ENCODE measurements at regions of chr6 and their contacts with region 1.

Region 1: DNA sequence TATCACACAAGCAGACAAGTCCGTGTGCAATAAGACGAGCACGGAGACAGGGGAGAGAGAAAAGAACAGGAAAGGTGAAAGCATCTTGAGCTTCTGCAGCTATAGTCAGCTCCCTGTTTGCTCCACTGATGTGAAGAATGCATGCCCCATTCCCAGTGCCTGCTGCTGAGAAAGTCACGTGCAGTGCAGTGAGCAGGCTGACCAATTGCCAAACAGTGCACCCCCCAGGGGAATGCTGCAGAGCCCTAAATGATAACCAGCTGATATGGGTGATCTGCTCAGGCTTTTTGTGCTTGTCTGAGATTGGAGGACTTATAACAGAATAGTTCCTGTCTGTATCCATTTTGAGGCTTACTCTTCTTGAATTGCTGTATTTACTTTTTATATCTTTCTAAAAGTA is 121.5 kb downstream of the PACRG start:
- DNase-seq: no peak
- ATAC-seq: no peak

Region 2: DNA sequence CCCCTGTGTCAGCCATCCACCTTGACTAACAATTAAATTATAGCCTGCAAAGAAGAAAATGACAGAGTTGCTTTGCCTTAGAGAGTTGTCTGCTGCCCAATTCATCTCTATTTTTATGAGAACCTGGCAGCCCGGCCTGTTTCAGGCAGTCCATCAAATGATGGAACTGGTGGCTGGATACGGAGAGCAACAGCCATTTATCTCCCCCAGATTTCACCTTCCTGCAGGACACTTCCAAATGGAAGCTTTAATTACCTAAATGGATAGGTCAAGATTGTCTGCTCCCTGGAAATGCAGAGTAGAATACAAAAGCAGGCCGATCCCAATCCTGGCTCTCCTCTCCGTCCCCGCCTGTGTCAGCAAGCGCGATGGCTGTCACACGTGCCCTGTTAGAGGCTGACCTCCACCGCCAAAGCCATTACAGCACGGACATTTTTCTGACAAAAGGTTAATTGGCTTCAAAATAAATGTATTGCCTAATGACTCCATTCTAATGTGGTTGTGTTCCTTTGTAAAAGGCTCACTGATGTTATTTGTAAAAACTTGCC is 34.8 kb before region 1 on chr6:
- intact Hi-C with region 1: no loop called
- DNase-seq: peak; percentile 57
- ATAC-seq: no peak

Region 3: GRCh38 chr6:162951164-162951743 is 102.0 kb after region 1 on chr6:
- intact Hi-C with region 1: no loop called
- DNase-seq: no peak
- ATAC-seq: no peak

Region 4: GRCh38 chr6:164554700-164555476 is 1705.6 kb after region 1 on chr6:
- intact Hi-C with region 1: loop called (anchors 5 kb)
- DNase-seq: no peak
- ATAC-seq: peak; percentile 79

Measured in Right ventricle myocardium inferior (tissue), 1 donor.